ENCODE measurements at regions of chr6 and their contacts with region 1.

Region 1: DNA sequence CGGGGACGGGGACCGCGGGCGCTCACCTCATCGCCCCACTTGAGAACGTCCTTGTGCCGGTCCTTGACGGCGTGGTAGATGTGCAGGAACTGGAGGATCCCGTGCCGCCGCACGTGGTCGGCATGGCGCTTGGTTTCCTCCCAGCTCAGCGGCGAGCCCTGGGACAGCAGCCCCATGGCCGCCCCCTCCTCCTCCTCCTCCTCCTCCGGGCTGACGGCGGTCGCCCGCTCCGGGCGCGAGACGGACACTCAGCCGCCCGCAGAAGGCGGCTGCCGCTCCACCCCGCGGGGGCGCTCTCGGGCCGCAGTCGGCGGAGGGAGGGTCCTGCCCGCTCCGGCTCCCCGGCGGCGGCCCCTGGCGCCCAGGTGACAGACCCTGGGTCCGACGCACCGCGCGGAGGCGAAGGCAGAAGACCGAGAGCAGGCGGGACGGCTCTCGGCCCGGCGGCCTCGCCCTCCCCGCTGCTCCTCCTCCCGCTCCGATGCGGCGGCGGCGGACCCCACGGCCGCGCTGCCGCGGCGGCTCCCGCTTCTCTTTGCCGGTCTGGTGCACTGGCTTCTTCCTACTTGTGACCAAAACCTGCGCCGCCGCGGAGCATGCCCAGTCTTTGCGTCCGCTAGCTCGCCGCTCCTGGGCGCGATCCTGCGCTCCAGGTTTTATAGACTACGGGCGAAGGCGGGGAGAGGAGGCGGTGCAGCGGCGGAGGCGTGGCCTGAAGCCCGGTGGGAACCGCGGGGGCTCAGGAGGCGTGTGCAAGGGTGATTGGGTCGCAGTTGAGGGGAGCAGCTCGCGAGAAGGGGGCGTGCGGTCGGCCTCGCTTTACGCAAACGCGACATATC is at the start of gene GCLC:
- DNase-seq: peak; percentile 79 to 97
- H3K4me3 ChIP-seq: peak within 1 kb of the TSS; percentile 81 to 96
- H3K27ac ChIP-seq: peak within 1 kb of the TSS; percentile 89 to 93
- H3K4me1 ChIP-seq: peaks cover 0 to 14% of the 10 kb centered on the region in 2 donors
- H3K27me3 ChIP-seq: no peaks in the 10 kb centered on the region
- CTCF ChIP-seq: peak in 2 of 3 experiments; percentile 60 to 72
- total RNA-seq, gene GCLC: 54.9 TPM

Region 2: GRCh38 chr6:53348371-53349208 is 196.1 kb before region 1 on chr6 and contains the start of gene ELOVL5:
- intact Hi-C with region 1: loop called (anchors 2 kb)
- DNase-seq: peak; percentile 99 to 100
- H3K4me3 ChIP-seq: peak within 1 kb of the TSS; percentile 93 to 98
- H3K27ac ChIP-seq: peak within 1 kb of the TSS; percentile 99
- H3K4me1 ChIP-seq: peaks cover 0 to 5% of the 10 kb centered on the region in 2 donors
- H3K27me3 ChIP-seq: no peaks in the 10 kb centered on the region
- CTCF ChIP-seq: no peak
- total RNA-seq, gene ELOVL5: 53.7 TPM

Region 3: DNA sequence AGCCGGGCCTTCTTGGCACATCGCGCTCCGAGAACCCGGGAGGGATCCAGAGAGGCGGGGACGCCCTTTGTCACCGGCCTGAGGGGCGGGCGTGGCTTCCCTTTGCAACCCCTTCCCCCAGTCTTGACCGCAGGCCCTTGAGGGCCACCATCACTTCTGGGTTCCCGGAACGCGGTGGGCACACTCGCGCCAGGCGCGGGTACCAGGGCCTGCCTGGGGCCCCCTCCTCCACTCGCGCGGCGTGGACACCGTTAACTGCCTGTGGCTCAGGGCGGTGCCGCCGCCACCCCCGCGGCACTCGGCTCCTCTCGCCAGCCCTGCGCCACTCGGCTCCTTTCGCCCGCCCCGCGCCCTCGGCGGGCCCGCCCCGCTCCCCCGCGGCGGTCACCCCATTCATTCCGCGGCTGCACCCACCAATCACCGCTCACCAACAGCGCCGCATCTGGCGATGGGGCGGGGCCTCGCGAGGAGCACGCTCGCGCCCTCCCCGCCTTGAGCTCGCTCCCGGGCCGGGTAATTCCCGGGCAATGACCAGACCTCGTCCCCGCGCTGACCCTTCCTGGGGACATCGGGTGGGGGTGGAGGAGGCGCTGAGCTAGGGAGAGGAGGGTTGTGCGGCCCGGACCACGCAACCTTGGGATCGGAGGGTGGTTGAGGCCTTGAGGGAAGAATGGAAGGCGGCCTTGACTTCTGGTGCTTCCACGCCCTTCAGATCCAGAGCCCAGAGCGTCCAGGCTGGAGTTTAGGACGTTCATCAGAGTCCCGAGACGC is 185.4 kb before region 1 on chr6:
- intact Hi-C with region 1: loop called (anchors 2 kb)
- DNase-seq: peak; percentile 87 to 98
- H3K4me3 ChIP-seq: peak overlapping the region; percentile 53 to 80
- H3K27ac ChIP-seq: peak overlapping the region; percentile 78 to 94
- H3K4me1 ChIP-seq: peaks cover 0 to 4% of the 10 kb centered on the region in 2 donors
- H3K27me3 ChIP-seq: no peaks in the 10 kb centered on the region
- CTCF ChIP-seq: no peak

Region 4: DNA sequence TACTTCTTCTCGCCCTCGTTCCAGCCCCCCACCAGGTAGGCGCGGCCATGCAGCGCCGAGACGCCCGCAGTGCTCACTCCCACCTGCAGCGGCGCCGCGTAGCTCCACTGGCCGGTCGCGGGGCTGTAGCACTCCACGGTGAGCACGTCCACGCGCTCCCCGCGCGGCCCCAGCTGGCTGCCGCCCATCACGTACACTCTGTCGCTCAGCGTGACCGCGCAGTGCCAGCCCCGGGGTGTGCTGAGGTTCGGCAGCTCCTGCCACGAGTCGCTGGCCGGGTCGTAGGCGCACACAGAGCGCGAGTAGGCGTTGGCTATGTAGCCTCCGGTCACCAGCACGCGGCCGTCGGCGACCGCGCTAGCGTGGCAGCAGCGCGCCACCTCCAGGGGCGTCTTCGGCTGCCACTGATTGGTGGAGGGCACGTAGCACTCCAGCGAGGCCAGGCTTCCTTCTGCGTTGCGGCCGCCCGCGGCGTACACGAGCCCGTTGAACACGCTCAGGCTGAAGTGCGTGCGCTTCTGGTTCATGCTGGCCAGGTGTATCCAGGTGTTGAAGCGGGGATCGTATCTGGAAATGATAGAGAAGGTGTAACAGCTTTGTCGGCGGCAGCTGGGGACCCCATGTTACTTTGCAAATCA is 107.2 kb after region 1 on chr6:
- intact Hi-C with region 1: loop called (anchors 2 kb)
- DNase-seq: peak; percentile 24 to 80
- H3K4me3 ChIP-seq: peak overlapping the region; percentile 71
- H3K27ac ChIP-seq: no peak overlapping the region
- H3K4me1 ChIP-seq: peaks cover 0 to 5% of the 10 kb centered on the region in 2 donors
- H3K27me3 ChIP-seq: no peaks in the 10 kb centered on the region
- CTCF ChIP-seq: peak; percentile 9 to 31 (median 26)